Activated CD4-positive, alpha-beta T cell treated with anti-CD3 and anti-CD28 coated beads, Interleukin-2, amount 10 ng/mL, durations not matched to agents 24 days and 14 days (primary cell): ENCODE measurements at regions of chr9 and their contacts with region 1.

Region 1: DNA sequence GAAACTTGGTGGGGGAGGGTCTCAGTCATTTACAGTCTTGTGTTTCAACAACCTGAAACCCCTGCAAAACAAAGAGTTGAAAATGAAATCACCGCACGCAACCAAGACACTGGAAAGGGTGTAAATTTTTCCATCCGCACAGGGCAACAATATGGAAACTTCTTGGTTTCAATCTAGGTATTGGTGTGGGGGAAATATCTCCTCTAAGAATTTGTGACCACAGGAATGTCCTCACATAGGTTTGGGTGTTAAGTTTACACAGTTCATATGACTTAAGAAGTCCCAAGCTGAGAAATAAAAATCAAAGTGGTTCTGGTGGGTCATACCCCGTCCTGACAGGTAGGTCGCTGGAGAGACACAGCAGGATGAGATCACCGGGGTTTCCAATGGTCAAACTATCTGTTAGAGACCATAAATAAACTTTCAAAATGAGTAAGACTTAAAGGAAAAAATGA is 51.9 kb upstream of the PIP5K1B start:
- DNase-seq: peak; percentile 77
- H3K4me3 Mint-ChIP-seq: peak overlapping the region; percentile 72
- H3K27ac Mint-ChIP-seq: peak overlapping the region; percentile 93
- H3K4me1 Mint-ChIP-seq: peaks cover 47% of the 10 kb centered on the region
- H3K27me3 Mint-ChIP-seq: peaks cover 2% of the 10 kb centered on the region

Region 2: GRCh38 chr9:68446836-68447235 is 206.3 kb before region 1 on chr9:
- intact Hi-C with region 1: no loop called
- DNase-seq: no peak
- H3K4me3 Mint-ChIP-seq: no peak overlapping the region
- H3K27ac Mint-ChIP-seq: no peak overlapping the region
- H3K4me1 Mint-ChIP-seq: no peaks in the 10 kb centered on the region
- H3K27me3 Mint-ChIP-seq: peaks cover 4% of the 10 kb centered on the region

Region 3: GRCh38 chr9:68584189-68585033 is 68.8 kb before region 1 on chr9:
- intact Hi-C with region 1: loop called (anchors 1 kb)
- DNase-seq: peak; percentile 94
- H3K4me3 Mint-ChIP-seq: no peak overlapping the region
- H3K27ac Mint-ChIP-seq: no peak overlapping the region
- H3K4me1 Mint-ChIP-seq: peaks cover 13% of the 10 kb centered on the region
- H3K27me3 Mint-ChIP-seq: peaks cover 2% of the 10 kb centered on the region

Region 4: GRCh38 chr9:68672215-68672614 is 19.0 kb after region 1 on chr9:
- intact Hi-C with region 1: loop called (anchors 1 kb)
- DNase-seq: no peak
- H3K4me3 Mint-ChIP-seq: no peak overlapping the region
- H3K27ac Mint-ChIP-seq: peak overlapping the region; percentile 63
- H3K4me1 Mint-ChIP-seq: peaks cover 17% of the 10 kb centered on the region
- H3K27me3 Mint-ChIP-seq: peaks cover 9% of the 10 kb centered on the region

Region 5: GRCh38 chr9:68779558-68780384 is 126.6 kb after region 1 on chr9:
- intact Hi-C with region 1: loop called (anchors 1 kb)
- DNase-seq: peak; percentile 98
- H3K4me3 Mint-ChIP-seq: no peak overlapping the region
- H3K27ac Mint-ChIP-seq: no peak overlapping the region
- H3K4me1 Mint-ChIP-seq: peaks cover 10% of the 10 kb centered on the region
- H3K27me3 Mint-ChIP-seq: peaks cover 4% of the 10 kb centered on the region

Region 6: GRCh38 chr9:68974431-68974830 is 321.3 kb after region 1 on chr9:
- intact Hi-C with region 1: loop called (anchors 1 kb)
- DNase-seq: peak; percentile 76
- H3K4me3 Mint-ChIP-seq: peak overlapping the region; percentile 65
- H3K27ac Mint-ChIP-seq: peak overlapping the region; percentile 84
- H3K4me1 Mint-ChIP-seq: peaks cover 57% of the 10 kb centered on the region
- H3K27me3 Mint-ChIP-seq: no peaks in the 10 kb centered on the region

Region 7: DNA sequence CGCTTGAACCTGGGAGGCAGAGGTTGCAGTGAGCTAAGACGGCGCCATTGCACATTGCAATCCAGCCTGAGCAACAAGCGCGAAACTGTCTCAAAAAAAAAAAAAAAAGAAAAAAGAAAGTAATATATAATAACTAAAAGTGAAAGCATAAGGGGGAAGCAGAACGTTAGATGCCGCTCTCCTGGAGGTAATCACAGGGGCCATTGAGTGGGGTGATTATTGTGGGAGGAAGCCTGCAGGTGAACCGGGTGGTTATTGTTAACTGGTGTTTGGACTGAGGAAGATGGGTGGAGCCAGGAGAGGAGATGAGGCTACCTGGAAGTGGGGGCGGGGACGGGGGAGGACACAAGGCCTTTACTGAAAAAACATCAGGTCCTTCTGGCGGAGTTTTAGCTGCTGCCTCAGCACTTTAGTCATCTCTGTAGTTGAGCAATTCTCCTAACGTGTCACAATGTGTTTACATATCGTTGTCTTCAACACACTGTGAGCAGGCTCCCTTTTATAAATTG is 515.6 kb after region 1 on chr9:
- intact Hi-C with region 1: no loop called
- DNase-seq: peak; percentile 86
- H3K4me3 Mint-ChIP-seq: peak overlapping the region; percentile 83
- H3K27ac Mint-ChIP-seq: peak overlapping the region; percentile 91
- H3K4me1 Mint-ChIP-seq: peaks cover 34% of the 10 kb centered on the region
- H3K27me3 Mint-ChIP-seq: peaks cover 13% of the 10 kb centered on the region

Region 8: GRCh38 chr9:70413798-70414775 is 1760.9 kb after region 1 on chr9 and contains the start of gene KLF9:
- intact Hi-C with region 1: loop called (anchors 5 kb)
- DNase-seq: peak; percentile 97
- H3K4me3 Mint-ChIP-seq: peak within 1 kb of the TSS; percentile 100
- H3K27ac Mint-ChIP-seq: peak within 1 kb of the TSS; percentile 100
- H3K4me1 Mint-ChIP-seq: peaks cover 45% of the 10 kb centered on the region
- H3K27me3 Mint-ChIP-seq: no peaks in the 10 kb centered on the region
- total RNA-seq, gene KLF9: 16.3 and 16.5 TPM in 2 replicates